ENCODE measurements at regions of chr1 and their contacts with region 1.

Region 1: DNA sequence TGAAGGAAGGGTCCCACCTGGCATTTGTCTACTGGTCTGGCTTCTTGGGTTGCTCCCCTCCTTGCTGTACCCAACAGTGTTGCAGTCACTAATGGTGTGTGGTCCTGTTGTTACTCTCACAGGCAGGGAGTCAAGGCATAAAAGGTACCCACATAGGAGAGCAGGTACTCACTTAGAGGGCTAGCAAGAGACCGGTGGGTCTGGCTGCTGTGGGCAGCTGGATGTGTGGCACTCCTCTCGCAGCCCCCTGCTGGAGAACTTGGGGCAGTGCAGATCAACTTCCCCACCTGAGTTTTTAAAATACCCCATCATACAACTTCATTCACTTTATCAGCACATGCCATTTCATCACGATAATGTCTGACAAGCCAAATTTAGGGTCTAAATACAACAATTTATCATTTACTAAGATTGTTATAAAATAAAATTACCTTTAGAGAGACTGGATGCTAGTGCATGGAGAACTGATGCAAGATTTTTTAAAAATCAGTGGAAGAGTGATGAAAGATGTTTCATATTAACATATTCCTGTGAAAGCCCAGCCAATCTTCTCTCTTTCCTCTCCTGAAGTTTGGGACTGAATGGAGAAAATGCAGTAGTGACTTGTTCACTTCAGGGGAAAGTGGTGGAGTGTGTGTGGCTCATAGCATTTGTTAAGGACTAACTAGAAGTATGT is 42.8 kb downstream of the ACP6 start:
- DNase-seq: no peak
- ATAC-seq: peak; percentile 68

Region 2: GRCh38 chr1:147189514-147189913 is 438.1 kb before region 1 on chr1:
- intact Hi-C with region 1: no loop called
- DNase-seq: no peak
- ATAC-seq: no peak

Region 3: DNA sequence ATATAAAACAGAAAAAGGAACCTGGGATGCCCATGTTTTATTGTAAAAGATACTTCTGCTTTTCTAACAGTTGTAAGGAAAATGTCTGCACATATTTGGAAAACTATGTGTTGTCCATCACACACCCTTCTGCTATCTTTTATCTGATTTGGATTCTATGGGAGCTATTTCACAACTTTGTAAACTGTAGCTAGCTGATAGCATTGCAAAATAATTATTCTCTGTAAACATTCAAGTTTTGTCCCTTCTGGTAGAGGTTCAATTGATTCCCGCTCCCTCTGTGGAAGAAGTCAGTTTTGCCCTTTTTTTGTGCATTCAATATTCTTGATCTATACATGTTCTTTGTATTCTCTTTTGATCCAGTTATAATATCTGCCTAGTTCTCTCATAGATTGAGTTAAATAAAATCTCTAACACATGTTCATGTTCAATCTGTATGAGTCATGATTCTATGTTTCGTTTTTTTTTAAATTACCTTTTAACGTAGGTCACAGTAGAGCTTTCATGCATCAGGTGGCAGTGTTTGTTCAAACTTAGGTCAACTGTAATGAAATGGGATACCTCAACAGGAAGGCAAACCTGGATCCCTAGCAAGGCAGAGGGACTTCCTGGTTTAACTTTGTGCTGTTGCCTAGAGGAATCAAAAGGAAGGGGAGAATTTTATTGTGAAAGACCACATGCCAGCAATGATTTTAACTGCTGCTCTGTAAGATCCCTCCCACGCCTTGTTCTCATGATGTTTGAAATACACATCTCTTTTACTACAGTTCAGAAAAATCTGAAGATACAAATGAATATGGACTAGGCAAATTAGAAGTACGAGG is 112.3 kb before region 1 on chr1:
- intact Hi-C with region 1: loop called (anchors 5 kb)
- DNase-seq: no peak
- ATAC-seq: peak; percentile 77

Region 4: GRCh38 chr1:147605591-147605990 is 22.0 kb before region 1 on chr1:
- intact Hi-C with region 1: loop called (anchors 2 kb)
- DNase-seq: no peak
- ATAC-seq: no peak

Region 5: GRCh38 chr1:147808025-147808424 is 180.5 kb after region 1 on chr1:
- intact Hi-C with region 1: no loop called
- DNase-seq: no peak
- ATAC-seq: no peak

Measured in Right ventricle myocardium inferior (tissue), 1 donor.